Endothelial cell of umbilical vein (primary cell): ENCODE measurements at regions of chr1 and their contacts with region 1.

Region 1: GRCh38 chr1:180119837-180120236 is 34.8 kb upstream of the QSOX1 start:
- DNase-seq: no peak
- H3K4me3 ChIP-seq: no peak overlapping the region
- H3K27ac ChIP-seq: no peak overlapping the region
- H3K4me1 ChIP-seq: no peaks in the 10 kb centered on the region
- H3K27me3 ChIP-seq: no peaks in the 10 kb centered on the region
- CTCF ChIP-seq: no peak
- POLR2A ChIP-seq: no peak

Region 2: DNA sequence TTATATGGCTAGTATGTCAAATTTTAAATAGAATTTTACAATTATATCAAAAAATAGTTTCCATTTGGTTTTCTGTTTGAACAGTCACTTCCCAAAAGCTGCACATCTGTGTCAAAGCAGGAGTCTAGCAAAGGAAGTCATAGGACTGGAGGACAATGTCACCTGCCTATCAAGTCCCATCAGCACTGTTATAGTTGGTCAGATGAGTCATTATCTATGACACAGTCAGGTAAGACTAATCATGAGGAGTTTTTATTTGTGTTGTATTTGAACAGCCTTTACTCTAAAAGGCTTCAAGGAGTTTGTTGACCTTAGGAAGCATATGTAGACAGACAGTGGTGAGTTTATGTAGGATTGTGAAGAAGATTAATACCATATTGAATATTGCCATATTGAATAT is 39.4 kb before region 1 on chr1:
- CTCF ChIA-PET with region 1: no interaction called
- POLR2A ChIA-PET with region 1: interaction called, 10 read pairs
- dilution Hi-C with region 1: no loop called
- intact Hi-C with region 1: no loop called
- DNase-seq: no peak
- H3K4me3 ChIP-seq: no peak overlapping the region
- H3K27ac ChIP-seq: no peak overlapping the region
- H3K4me1 ChIP-seq: no peaks in the 10 kb centered on the region
- H3K27me3 ChIP-seq: no peaks in the 10 kb centered on the region
- CTCF ChIP-seq: no peak
- POLR2A ChIP-seq: no peak